Left cardiac atrium (tissue), 4 donors: ENCODE measurements at regions of chr15 and their contacts with region 1.

Region 1: GRCh38 chr15:81106560-81106959 is 27.5 kb upstream of the CFAP161 start:
- DNase-seq: peak; percentile 37
- ATAC-seq: peak; percentile 38 to 87

Region 2: DNA sequence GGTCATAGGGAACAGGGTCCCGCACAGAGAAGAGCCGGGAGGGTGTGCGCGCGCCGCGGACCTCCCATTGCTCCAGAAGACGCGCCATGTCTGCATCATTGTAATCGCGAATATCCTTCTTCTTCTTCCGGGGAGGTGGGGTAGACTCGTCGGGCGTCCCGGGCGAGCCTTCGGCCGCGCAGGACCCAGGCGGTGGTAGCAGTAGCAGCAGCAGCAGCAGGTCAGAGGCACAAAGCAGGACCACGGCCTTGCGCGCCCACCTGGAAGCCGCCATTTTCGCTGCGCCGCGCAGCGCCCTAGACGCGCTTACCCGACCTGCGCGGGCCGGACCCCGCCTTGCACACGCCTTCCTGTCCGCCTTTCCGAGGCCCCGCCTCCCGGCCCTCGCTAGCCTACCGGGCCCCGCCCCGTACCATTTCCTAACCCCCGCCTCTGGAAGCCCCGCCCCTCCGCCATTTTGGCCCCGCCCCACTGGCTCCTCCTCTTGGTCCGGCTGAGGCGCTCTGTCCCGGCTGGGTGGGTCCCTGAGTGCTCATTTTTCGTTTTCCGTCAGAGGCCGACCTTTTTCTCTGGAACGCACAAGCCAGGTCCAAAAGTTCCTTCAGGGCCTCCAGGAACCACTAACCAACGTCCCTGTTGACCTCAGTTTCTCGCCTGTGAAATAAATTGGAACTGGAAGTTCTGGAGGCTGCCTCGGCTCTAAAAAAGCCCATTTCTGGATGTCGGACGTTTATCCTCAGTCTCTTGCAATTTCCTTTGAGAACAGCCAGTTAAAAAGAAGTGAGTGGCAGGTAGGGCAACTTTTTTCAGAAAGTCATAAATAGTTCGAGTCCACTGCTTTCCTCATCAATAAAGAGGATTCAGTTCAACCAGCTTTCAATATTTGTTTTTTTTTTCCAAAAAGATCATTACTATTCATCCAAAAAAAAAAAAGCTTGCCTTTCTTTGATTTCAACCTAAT is 116.8 kb before region 1 on chr15 and contains the start of gene MESD:
- intact Hi-C with region 1: loop called in 1 of 2 experiments (anchors 10 kb)
- DNase-seq: peak; percentile 99
- ATAC-seq: peak; percentile 99
- total RNA-seq, gene MESD: 17.3 to 19.4 TPM

Region 3: GRCh38 chr15:81007428-81008064 is 99.0 kb before region 1 on chr15:
- intact Hi-C with region 1: loop called in 1 of 2 experiments (anchors 5 kb)
- DNase-seq: no peak
- ATAC-seq: no peak